PC-3 (cell line): ENCODE measurements at regions of chr11 and their contacts with region 1.

Region 1: DNA sequence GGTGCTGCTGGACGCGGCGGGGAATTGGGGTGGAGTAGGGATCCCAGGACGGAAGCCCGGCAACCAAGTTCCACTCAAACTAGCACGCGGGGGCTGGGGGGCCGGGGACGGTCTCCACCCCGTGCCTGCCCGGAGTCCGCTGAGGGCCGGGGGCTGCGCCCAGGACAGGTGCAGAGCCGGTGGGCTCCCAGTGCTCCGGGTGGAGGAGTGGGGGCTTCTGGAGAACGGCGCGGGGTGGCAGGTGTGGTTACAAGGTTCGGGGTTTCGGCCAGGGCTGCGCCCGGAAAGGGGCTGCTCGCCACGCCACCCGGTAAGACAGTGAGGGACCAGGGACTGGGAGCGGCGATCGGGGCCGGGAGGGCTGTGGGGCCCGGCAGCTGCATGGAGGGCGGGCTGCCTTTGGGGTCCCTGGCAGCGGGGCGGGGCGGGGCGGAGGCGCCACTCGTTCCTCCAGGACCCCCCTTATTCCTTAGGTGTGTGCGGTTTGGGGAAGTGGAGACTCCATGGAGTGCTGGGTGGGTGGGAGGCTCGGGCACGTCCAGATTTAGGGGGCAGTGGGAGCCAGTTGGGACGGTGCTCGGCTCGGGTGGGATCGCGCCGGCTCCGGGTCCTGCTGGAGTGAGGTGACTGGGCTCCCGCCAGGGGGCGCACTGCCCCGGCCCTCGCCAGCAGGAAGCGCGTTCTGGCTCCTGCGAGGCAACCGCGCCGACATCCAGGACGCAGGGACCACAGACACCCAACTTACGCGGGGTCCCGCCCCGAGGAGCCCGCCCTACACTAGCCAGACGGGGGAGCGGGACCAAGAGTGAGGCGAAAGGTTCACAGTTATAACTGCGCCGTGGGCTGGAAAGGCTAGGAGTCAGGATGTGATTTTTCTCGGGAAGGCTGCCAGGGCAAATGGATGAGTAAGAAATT is 868 bp downstream of the TSPAN18 start:
- DNase-seq: peak; percentile 52
- ATAC-seq: peak; percentile 92
- H3K4me3 ChIP-seq: peak overlapping the region; percentile 55
- H3K27ac ChIP-seq: no peak overlapping the region
- H3K4me1 ChIP-seq: peaks cover 4% of the 10 kb centered on the region; the same call in 1 of the 2 replicates
- H3K27me3 ChIP-seq: peaks cover 62% of the 10 kb centered on the region
- CTCF ChIP-seq: peak; percentile 74

Region 2: DNA sequence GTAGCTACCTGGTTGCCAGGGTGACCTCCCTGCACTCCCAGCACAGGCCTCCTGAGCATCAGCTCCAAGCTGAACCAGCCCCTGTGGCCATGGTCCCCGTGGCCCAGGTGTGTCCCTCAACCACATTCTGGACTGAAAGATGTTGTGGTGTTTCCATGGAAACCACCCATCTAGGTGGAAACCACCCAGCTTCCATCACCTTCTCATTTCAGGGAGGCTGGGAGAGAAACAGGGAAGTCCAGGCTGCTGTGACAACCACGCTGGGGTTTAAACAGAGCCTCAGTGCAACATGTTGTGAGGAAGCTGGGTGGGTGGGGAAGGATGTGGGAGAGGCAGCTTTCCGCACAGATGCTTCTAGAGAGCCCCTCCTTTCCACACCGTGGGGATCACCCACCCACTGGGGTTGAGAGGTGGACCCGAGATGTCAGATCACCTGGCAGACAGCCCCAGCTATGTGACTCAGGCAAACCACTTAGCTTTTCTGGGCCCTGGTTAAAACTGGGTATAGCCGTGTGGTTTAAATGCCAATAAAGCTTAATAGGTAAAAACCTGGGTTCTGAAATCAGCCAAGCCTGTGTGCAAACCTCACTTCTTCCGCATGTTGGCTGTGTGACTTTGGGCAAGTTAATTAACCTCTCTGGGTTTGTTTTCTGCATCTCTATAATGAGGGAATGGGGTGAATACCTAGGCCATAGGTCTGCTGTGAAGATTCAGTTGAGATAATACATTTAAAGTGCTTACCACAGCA is 115.8 kb before region 1 on chr11:
- CTCF ChIA-PET with region 1: no interaction called
- POLR2A ChIA-PET with region 1: interaction called, 10 read pairs
- intact Hi-C with region 1: no loop called
- DNase-seq: no peak
- ATAC-seq: no peak
- H3K4me3 ChIP-seq: no peak overlapping the region
- H3K27ac ChIP-seq: no peak overlapping the region
- H3K4me1 ChIP-seq: no peaks in the 10 kb centered on the region
- H3K27me3 ChIP-seq: no peaks in the 10 kb centered on the region
- CTCF ChIP-seq: no peak

Region 3: GRCh38 chr11:44893846-44894617 is 166.4 kb after region 1 on chr11:
- CTCF ChIA-PET with region 1: no interaction called
- POLR2A ChIA-PET with region 1: no interaction called
- intact Hi-C with region 1: loop called (anchors 5 kb)
- DNase-seq: peak; percentile 65
- ATAC-seq: peak; percentile 94
- H3K4me3 ChIP-seq: no peak overlapping the region
- H3K27ac ChIP-seq: no peak overlapping the region
- H3K4me1 ChIP-seq: no peaks in the 10 kb centered on the region
- H3K27me3 ChIP-seq: peaks cover 7% of the 10 kb centered on the region; the same call in 1 of the 2 replicates
- CTCF ChIP-seq: peak; percentile 86

Region 4: DNA sequence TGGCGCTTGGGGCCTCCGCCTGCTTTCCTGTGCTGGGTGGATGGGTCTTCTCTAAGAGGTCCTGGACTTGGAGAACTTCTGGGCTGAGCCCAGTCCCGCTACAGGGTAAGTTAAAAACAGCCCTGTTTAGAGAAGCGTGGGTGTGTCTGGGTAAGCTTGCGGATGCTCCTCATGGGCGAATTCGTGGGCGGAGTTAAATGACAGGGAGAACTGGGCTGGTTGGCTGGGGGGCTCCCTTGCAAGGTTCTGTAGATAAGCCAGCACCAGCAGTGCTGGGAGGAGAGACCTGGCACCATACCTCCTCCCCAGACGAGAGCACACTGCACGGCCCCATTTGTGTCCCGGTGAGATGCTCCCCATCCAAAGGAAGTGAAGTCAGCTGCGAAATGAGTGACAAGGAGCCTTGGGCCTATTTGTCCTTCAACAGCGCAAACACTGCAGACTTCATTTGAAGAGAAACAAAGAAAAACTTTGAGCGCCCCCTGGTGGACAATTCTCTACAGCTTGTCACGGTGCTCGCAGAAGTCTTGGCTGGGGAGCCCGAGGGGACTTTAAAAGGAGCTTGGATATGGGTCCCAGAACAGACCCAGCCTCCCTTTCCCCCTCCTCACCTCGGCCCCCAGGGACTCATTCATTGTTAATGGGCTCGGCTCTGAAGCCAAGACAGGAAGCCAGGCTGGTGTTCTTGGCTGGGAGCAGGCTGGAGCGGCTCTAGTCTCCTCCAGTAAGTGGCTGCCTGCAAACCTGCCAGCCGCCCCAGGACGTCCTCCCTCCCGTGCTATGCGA is 183.6 kb after region 1 on chr11:
- CTCF ChIA-PET with region 1: no interaction called
- POLR2A ChIA-PET with region 1: no interaction called
- intact Hi-C with region 1: loop called (anchors 1 kb)
- DNase-seq: peak; percentile 91
- ATAC-seq: peak; percentile 96
- H3K4me3 ChIP-seq: peak overlapping the region; percentile 34; the same call in 1 of the 2 replicates
- H3K27ac ChIP-seq: no peak overlapping the region
- H3K4me1 ChIP-seq: no peaks in the 10 kb centered on the region
- H3K27me3 ChIP-seq: peaks cover 14% of the 10 kb centered on the region
- CTCF ChIP-seq: peak; percentile 82